ENCODE measurements at regions of chr2 and their contacts with region 1.

Region 1: GRCh38 chr2:127829845-127830246 is 18.9 kb upstream of the WDR33 start:
- DNase-seq: no peak
- ATAC-seq: no peak

Region 2: DNA sequence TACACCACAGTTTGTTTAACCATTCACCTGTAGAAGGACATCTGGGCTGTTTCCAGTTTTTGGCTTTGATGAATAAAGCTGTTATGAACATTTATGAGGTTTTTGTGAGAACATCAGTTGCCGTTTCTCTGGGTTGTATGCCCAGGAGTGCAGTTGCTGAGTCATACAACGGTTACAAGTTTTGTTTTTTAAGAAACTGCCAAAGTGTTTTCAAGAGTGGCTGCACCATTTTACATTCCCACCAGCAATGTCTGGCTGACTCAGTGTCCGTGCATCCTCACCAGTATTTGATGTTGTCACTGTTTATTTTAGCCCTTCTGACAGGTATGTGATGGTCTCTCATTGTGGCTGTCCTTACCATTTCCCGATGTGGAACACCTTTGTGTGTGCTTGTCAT is 231.9 kb before region 1 on chr2:
- intact Hi-C with region 1: loop called (anchors 5 kb)
- DNase-seq: no peak
- ATAC-seq: no peak

Measured in left ventricle myocardium superior (tissue), 1 donor.